ENCODE measurements at regions of chr4 and their contacts with region 1.

Region 1: DNA sequence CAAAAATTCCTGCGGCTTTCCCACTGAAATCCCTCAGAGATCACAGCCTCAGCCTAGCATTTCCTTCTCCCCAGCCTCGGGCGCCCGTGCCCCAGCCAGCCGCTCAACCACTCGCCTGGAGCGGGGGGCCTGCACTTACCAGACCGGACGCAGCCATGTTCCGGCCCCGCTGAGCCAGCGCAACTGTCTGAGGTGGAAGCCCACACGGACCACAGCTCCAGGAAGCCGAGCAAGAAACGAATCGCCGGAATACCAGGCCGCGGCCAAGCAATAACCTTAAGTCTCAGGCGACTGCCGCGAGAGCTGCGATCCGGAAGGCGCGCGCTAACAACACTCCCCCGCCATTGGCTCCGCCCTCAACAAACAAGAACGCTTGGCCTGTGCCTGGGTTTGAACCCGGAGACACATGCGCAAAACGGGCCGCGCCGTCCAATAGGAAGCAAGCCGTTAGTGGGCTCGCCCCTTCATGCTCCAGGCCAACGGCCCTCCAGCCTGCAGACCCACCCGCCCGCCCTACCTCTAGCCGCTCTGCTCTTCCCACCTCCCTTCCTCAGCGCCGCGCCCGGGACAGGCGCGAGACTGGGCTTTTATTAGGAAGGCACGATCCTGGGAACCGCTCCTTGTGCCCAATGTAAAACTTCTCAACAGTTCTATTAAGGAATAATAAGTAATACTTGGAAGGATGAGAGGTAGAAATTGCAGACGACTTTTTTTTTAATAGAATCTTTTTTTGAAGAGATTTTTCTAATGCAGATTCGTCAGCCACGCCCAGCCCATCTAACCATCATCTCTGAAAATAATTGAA is at the start of gene CENPC:
- DNase-seq: peak; percentile 74 to 91 (median 87)
- ATAC-seq: peak; percentile 94
- H3K4me3 ChIP-seq: peak within 1 kb of the TSS; percentile 94
- H3K4me3 Mint-ChIP-seq: peak within 1 kb of the TSS; percentile 92 to 100 (median 98)
- H3K27ac ChIP-seq: peak within 1 kb of the TSS; percentile 98
- H3K27ac Mint-ChIP-seq: peak within 1 kb of the TSS; percentile 98 to 100 (median 100)
- H3K4me1 ChIP-seq: peaks cover 5 to 24% of the 10 kb centered on the region in 2 donors
- H3K4me1 Mint-ChIP-seq: peaks cover 16 to 60% (median 41%) of the 10 kb centered on the region in 7 donors
- H3K27me3 ChIP-seq: no peaks in the 10 kb centered on the region
- H3K27me3 Mint-ChIP-seq: no peaks in the 10 kb centered on the region
- total RNA-seq, gene CENPC: 33.9 to 89.7 (median 63.8) TPM

Region 2: GRCh38 chr4:67575232-67575888 is 30.0 kb after region 1 on chr4:
- CTCF ChIA-PET with region 1: interaction called, 10 read pairs
- POLR2A ChIA-PET with region 1: interaction called, 16 read pairs
- intact Hi-C with region 1: loop called in 1 of 2 experiments (anchors 1 kb)
- DNase-seq: peak in 7 of 9 donors; percentile 29 to 63 (median 42)
- ATAC-seq: peak; percentile 86
- H3K4me3 ChIP-seq: peak overlapping the region; percentile 22
- H3K4me3 Mint-ChIP-seq: peak overlapping the region; percentile 58 to 82 (median 74)
- H3K27ac ChIP-seq: peak overlapping the region; percentile 70
- H3K27ac Mint-ChIP-seq: peak overlapping the region; percentile 79 to 95 (median 90)
- H3K4me1 ChIP-seq: peaks cover 0 to 33% of the 10 kb centered on the region in 2 donors
- H3K4me1 Mint-ChIP-seq: peaks cover 36 to 85% (median 68%) of the 10 kb centered on the region in 7 donors
- H3K27me3 ChIP-seq: no peaks in the 10 kb centered on the region
- H3K27me3 Mint-ChIP-seq: no peaks in the 10 kb centered on the region

Region 3: GRCh38 chr4:67632492-67632891 is 87.1 kb after region 1 on chr4:
- CTCF ChIA-PET with region 1: no interaction called
- POLR2A ChIA-PET with region 1: no interaction called
- intact Hi-C with region 1: loop called in 1 of 2 experiments (anchors 2 kb)
- DNase-seq: no peak
- ATAC-seq: no peak
- H3K4me3 ChIP-seq: no peak overlapping the region
- H3K4me3 Mint-ChIP-seq: peak overlapping the region in 2 of 10 donors; percentile 49 to 93
- H3K27ac ChIP-seq: no peak overlapping the region
- H3K27ac Mint-ChIP-seq: peak overlapping the region in 2 of 9 donors; percentile 56 to 86
- H3K4me1 ChIP-seq: no peaks in the 10 kb centered on the region
- H3K4me1 Mint-ChIP-seq: peaks cover 0 to 20% (median 0%) of the 10 kb centered on the region in 7 donors
- H3K27me3 ChIP-seq: no peaks in the 10 kb centered on the region
- H3K27me3 Mint-ChIP-seq: no peaks in the 10 kb centered on the region

Region 4: GRCh38 chr4:67746797-67747495 is 201.5 kb after region 1 on chr4:
- CTCF ChIA-PET with region 1: interaction called, 6 read pairs
- POLR2A ChIA-PET with region 1: no interaction called
- intact Hi-C with region 1: loop called (anchors 1 kb)
- DNase-seq: peak in 5 of 9 donors; percentile 27 to 48 (median 41)
- ATAC-seq: no peak
- H3K4me3 ChIP-seq: no peak overlapping the region
- H3K4me3 Mint-ChIP-seq: no peak overlapping the region
- H3K27ac ChIP-seq: no peak overlapping the region
- H3K27ac Mint-ChIP-seq: no peak overlapping the region
- H3K4me1 ChIP-seq: no peaks in the 10 kb centered on the region
- H3K4me1 Mint-ChIP-seq: peaks cover 0 to 14% (median 0%) of the 10 kb centered on the region in 7 donors
- H3K27me3 ChIP-seq: no peaks in the 10 kb centered on the region
- H3K27me3 Mint-ChIP-seq: no peaks in the 10 kb centered on the region

Region 5: DNA sequence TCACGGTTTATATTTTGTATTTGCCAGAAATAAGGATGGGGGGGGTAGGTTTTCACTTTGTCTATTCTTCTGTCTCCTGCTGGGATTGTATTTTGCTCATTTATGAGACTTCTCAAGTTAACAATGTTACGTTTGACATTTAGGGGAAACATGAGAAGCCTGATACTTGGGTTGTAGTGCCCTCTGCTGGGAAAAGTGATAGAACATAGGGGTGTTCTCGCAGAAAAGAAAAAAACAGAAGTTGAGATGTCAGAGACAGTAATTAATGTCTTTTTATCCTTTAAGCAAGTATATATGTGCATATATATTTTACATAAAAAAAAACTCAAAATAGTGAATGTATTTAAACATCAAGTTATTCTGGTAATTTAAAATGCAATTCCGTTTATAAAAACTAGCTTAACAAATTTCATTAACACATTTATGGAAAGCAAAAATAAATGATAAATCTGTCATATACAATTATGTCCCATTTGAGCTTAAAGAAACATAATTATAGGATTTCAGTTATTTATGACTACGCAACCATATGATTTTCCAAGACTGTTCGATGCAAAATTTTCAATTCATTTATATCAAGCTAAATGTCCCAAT is 630.3 kb after region 1 on chr4:
- CTCF ChIA-PET with region 1: no interaction called
- POLR2A ChIA-PET with region 1: no interaction called
- intact Hi-C with region 1: loop called in 1 of 2 experiments (anchors 2 kb)
- DNase-seq: peak in 6 of 9 donors; percentile 17 to 31 (median 22)
- ATAC-seq: no peak
- H3K4me3 ChIP-seq: no peak overlapping the region
- H3K4me3 Mint-ChIP-seq: no peak overlapping the region
- H3K27ac ChIP-seq: no peak overlapping the region
- H3K27ac Mint-ChIP-seq: no peak overlapping the region
- H3K4me1 ChIP-seq: no peaks in the 10 kb centered on the region
- H3K4me1 Mint-ChIP-seq: peaks cover 0 to 4% (median 0%) of the 10 kb centered on the region in 7 donors
- H3K27me3 ChIP-seq: no peaks in the 10 kb centered on the region
- H3K27me3 Mint-ChIP-seq: peaks cover 5 to 20% (median 12%) of the 10 kb centered on the region in 5 donors